ENCODE measurements at regions of chr1 and their contacts with region 1.

Region 1: GRCh38 chr1:206951318-206952100 is 5.2 kb upstream of the PIGR start:
- H3K4me3 ChIP-seq: no peak overlapping the region
- H3K27ac ChIP-seq: no peak overlapping the region
- H3K4me1 ChIP-seq: no peaks in the 10 kb centered on the region
- CTCF ChIP-seq: no peak

Region 2: DNA sequence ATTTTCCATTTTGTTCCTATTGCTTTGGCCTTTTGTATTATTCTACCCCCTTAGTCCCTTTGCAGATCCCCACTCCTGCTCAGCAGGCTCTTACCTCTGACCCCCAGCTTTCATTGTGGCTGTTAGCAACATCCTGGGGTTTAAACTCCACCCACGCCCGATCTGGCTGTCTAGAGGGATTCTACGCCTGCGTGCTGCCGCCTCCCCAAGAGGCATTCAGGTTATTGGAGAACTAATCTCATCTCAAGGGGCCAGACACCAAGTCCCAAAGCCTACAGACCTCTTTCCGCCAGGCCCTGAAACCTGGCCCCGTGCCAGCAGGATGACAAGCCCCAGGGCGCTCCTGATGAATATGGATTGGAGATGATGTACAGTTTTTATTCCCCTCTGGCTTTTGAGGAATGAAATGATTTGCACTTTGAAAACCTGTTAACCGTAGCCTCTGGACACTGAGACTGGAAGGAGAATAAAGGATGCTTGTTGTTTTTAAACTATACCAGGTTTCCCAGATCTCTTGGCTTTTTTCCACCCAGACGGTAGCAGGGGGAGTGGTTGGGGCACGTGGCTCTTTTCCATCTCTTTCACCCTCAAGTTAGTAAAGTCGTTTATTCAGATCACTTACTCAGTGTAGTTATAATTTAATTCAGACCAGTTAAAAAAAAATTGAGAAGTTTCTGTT is 495.7 kb before region 1 on chr1:
- CTCF ChIA-PET with region 1: no interaction called
- POLR2A ChIA-PET with region 1: no interaction called
- H3K4me3 ChIP-seq: no peak overlapping the region
- H3K27ac ChIP-seq: peak overlapping the region; percentile 14; the same call in 1 of the 2 replicates
- H3K4me1 ChIP-seq: peaks cover 8% of the 10 kb centered on the region
- CTCF ChIP-seq: no peak

Region 3: DNA sequence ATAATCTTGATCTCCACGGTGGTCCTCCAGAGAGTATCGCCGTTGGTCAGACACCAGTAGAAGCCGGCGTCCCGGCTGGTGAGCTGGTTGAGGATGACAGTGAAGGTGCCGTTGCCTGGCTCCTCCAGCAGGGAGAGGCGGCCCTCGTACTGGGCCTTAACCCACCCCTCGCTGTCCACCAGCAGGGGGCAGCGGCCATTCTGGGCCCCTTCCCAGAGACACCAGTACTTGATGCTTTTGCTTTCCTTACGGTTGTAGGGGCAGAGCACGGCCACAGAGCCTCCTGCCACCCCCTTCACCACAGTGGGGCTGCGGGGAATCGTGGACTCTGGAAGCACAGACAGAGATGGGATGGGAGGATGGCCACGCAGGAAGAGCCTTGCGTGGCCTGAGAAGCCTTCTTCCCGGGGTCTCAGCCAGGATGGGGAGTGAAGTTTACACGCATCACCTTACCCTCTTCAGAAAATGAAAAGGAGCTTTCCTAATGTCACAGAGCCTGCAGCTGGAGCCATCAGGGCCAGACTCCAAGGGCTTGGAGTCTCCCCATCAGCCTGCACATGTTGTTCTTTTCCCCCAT is 15.9 kb before region 1 on chr1:
- CTCF ChIA-PET with region 1: interaction called, 13 read pairs
- POLR2A ChIA-PET with region 1: no interaction called
- H3K4me3 ChIP-seq: no peak overlapping the region
- H3K27ac ChIP-seq: no peak overlapping the region
- H3K4me1 ChIP-seq: no peaks in the 10 kb centered on the region
- CTCF ChIP-seq: peak; percentile 51; the same call in 1 of the 2 replicates

Region 4: DNA sequence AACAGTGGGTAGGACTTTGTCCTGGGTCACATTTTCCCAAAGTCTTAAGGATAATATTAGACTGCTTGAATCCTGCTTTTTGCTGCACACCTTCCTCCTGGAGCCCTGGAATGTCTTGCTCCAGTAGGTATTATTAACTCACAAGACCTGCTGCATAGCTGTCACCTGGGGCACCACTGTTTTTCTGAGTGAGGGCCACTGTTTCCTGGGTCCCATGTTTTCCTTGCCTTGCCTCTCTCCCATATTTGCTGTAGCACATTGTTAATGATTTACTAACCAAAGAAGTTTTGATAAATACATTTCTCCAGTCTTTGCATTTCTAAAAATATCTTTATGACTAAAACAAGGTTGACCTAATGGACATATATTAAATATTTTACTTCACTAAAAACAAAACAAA is 41.3 kb after region 1 on chr1:
- CTCF ChIA-PET with region 1: no interaction called
- POLR2A ChIA-PET with region 1: no interaction called
- H3K4me3 ChIP-seq: no peak overlapping the region
- H3K27ac ChIP-seq: no peak overlapping the region
- H3K4me1 ChIP-seq: no peaks in the 10 kb centered on the region
- CTCF ChIP-seq: no peak

Region 5: DNA sequence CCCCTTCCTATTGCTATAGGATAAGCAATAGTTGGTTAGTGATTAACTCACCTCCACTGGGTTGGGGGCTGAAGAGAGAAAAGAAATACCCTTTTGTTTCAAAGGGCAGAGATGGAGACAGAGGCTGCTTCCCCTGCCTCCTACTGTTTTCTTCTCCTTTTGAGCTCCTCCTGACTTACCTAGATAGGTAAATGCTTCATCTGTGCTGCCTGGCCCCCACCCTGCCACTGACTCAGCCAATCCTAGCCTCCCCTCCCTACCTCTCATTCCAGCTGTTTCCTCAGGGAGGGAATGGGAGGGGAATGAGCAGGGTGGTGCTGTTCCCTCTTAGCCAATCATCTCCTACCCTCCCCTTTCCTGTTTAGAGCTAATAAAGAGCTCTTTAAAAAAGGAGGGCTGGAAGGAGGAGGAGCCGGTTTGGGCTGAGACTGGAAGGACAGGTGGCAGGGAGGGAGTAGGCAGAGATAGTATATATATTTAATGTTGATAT is 81.1 kb after region 1 on chr1 and contains the start of gene C1orf116:
- CTCF ChIA-PET with region 1: no interaction called
- POLR2A ChIA-PET with region 1: no interaction called
- H3K4me3 ChIP-seq: no peak within 1 kb of the TSS
- H3K27ac ChIP-seq: no peak within 1 kb of the TSS
- H3K4me1 ChIP-seq: no peaks in the 10 kb centered on the region
- CTCF ChIP-seq: no peak